ENCODE measurements at regions of chr11 and their contacts with region 1.

Region 1: DNA sequence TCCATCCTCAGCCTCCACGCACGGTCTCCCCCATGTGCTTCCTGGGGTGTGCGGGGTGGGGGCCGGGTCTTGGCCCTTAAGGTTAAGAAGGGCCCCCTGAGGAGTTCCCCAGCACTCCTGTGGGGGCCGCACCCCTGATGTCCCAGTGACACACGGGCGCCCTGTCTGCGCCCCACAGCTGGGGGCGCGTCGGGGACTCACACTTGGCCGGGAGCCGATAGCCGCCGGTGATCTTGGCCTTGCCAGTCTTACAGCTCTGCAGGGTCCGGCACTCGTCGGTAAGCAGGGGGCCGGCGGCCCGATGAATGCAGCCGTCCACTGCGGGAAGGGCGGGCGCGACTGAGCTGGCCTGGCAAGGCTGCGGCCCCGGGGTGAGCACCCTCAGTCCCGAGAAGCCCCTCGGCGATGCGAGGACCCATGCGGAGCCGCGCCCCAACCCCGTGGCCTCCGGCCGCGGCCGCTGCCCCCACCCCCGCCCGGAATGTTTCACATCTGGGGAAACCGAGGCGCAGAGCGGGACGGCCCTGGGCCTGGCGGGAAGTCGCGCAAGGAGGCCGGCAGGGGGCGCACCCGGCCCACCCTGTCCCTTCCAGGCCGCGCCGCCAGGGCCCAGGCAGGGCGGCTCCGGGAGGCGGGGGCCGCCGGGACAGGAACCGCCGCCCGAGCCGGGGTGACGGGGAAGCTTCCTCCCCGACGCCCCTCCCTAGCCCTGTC is 13.9 kb downstream of the OTUB1 start:
- DNase-seq: peak; percentile 86
- ATAC-seq: peak; percentile 90

Region 2: DNA sequence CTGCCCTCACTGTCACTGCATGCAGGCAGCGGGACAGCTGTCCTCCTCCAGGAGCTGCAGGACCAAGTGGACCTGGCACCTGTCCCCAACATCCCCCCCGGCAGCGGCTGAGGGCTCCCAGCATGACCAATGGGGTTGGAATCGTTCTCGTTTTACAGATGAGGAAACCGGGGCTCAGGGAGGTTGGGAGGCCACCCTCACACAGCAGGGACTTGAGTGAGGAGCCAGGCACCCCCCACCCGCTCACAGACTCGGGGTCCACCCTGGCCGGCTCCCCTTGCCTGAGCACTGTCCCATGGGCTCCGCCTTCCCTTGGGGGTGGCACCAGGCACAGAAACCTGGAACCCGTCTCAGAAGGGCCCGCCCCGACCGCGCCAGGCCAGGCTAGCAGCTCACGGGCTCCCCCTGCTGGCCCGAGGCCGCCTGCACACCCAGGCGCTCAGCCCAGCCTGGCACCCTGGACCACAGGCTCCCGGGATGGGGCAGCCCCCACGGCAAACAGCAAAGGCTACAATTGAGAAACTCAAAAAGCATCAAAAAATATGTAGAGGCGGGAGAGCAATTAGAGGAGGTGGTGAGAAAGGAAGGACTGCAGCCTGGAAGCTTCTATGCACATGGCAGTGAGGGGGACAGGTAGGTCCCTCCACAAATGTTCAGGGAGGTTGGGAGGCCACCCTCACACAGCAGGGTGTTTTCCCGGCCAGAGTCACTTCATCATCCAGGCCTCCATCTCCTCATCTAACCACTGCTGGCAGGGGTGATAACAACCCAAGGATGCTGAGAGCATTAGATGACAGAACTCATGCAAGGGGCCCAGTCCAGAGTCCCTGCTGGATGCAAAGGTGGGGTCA is 152.9 kb after region 1 on chr11:
- intact Hi-C with region 1: loop called (anchors 1 kb)
- DNase-seq: peak; percentile 92
- ATAC-seq: peak; percentile 51

Region 3: GRCh38 chr11:64285885-64286815 is 286.0 kb after region 1 on chr11:
- intact Hi-C with region 1: no loop called
- DNase-seq: peak; percentile 17
- ATAC-seq: no peak